Dendritic cell treated with granulocyte-macrophage colony-stimulating factor and Interleukin-4, amounts not matched to agents 40 ng/mL and 50 ng/mL, for 4 days (primary cell): ENCODE measurements at regions of chr16 and their contacts with region 1.

Region 1: DNA sequence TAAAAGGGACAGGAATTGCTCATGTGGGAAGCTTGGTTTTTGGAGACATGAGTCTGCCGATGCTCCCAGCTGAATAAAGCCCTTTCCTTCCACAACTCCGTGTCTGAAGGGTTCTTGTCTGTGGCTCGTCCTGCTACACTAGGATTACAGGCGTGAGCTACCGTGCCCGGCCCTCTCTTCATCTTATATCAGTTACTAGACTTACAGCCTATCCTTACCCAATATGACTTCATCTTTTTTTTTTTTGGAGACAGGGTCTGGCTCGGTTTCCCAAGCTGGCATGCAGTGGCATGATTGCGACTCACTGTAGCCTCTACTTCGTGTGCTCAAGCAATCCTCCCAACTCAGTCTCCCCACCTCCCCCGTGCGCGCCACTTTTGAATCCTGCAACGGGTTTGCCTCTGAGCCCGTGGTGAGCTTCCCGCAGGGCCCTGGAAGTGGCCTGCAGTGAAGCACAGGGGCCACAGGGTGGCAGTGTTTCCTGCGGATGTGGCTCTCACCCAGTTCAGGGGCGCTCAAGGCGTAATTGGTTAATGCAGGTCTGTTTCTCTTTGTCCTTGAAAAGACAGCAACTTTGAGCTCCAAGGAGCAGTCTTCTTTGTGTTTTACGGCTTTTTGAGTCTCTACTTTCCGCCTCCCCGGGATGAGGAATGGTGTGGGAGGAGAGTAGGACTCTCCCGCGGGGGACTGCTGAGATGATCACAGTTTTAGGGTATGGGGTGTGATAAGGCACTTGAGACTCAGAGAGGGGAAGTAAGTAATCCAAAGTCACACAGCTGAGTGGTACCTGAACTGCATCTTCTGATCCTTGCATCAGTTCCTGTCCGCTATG is 22.7 kb upstream of the GPRC5B start:
- H3K4me3 Mint-ChIP-seq: no peak overlapping the region
- H3K27ac Mint-ChIP-seq: no peak overlapping the region
- H3K4me1 Mint-ChIP-seq: peaks cover 5% of the 10 kb centered on the region
- H3K27me3 Mint-ChIP-seq: peaks cover 23% of the 10 kb centered on the region

Region 2: DNA sequence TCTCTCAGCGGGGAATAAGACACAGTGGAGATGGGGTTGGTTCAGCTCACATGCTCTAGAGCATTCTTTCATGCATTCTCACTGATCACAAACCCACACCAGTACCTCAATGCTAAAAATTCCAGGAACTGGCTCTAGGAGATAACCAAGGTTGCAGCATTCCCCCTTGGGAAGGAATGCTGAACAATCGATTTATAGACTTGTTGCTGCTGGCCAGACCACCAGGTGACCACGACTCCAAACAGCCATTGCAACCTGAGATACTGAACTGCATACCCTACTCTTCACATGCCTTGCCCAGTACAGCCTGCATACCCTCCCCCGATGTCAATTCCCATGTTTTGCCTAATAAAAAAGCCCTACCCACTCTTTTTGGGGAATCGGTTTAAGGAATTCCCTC is 52.4 kb after region 1 on chr16:
- intact Hi-C with region 1: no loop called
- H3K4me3 Mint-ChIP-seq: no peak overlapping the region
- H3K27ac Mint-ChIP-seq: no peak overlapping the region
- H3K4me1 Mint-ChIP-seq: no peaks in the 10 kb centered on the region
- H3K27me3 Mint-ChIP-seq: peaks cover 2% of the 10 kb centered on the region

Region 3: DNA sequence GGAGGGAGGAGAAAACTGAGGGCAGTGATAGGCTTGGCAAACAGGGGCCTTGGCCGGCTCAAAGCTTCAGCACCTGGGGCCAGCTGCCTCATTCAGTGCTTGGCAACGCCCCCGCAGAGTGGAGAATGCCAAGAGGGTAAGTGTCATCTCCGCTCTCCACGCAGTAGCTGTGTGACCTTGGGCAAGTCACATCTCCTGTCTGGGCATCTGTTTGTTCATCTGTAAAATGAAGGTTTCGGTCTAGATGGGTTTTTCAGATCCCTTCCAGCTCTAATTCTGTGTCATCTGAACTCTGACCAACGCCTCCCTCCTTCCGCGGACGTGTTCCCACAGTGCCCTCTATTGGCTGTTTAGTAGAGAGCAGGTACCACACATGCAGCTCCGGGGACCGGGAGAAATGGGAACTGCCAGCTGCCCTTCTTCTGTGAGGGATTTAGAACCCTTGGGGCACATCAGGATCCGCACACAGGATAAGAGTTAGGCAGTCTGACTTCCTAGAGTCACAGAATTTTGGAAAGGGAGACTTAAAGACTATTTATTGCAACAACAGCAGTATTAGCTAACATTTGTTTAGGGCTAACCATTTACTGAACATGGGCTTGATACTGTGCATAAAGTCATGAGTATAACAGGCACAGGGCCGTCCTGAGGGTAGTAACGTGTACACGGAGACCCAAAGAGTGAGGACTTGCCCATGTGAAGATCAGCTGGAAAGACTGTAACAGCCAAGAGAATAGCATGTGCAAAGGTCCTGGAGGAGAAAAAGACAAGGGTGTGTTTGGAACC is 393.1 kb after region 1 on chr16:
- intact Hi-C with region 1: loop called (anchors 2 kb)
- H3K4me3 Mint-ChIP-seq: no peak overlapping the region
- H3K27ac Mint-ChIP-seq: no peak overlapping the region
- H3K4me1 Mint-ChIP-seq: peaks cover 5% of the 10 kb centered on the region
- H3K27me3 Mint-ChIP-seq: peaks cover 14% of the 10 kb centered on the region

Region 4: GRCh38 chr16:20383106-20384029 is 476.0 kb after region 1 on chr16:
- intact Hi-C with region 1: loop called (anchors 1 kb)
- H3K4me3 Mint-ChIP-seq: no peak overlapping the region
- H3K27ac Mint-ChIP-seq: no peak overlapping the region
- H3K4me1 Mint-ChIP-seq: peaks cover 2% of the 10 kb centered on the region
- H3K27me3 Mint-ChIP-seq: peaks cover 24% of the 10 kb centered on the region